Transverse colon (tissue), 4 donors: ENCODE measurements at regions of chr1 and their contacts with region 1.

Region 1: DNA sequence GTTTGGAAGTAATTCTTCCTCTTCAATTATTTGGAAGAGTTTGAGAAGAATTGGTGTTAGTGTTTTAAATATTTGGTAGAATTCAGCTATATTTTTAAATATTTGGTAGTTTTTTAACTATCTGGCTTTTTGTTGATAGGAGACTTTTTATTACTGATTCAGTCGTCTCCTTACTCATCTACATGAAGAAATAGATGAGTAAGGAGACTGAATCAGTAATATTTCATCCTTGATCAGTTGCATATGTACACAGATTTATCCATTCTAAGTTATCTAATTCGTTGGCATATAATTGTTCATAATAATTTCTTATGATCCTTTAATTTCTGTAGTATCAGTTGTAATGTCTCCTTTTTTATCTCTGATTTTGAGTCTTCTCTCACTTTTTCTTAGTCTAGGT is 224.1 kb downstream of the GPR52 start:
- DNase-seq: no peak
- H3K4me3 ChIP-seq: no peak overlapping the region
- H3K27ac ChIP-seq: no peak overlapping the region
- H3K4me1 ChIP-seq: no peaks in the 10 kb centered on the region
- H3K27me3 ChIP-seq: no peaks in the 10 kb centered on the region
- CTCF ChIP-seq: no peak
- EP300 ChIP-seq: no peak
- POLR2A ChIP-seq: no peak

Region 2: GRCh38 chr1:174652569-174653280 is 19.1 kb before region 1 on chr1:
- in situ Hi-C with region 1: no loop called
- intact Hi-C with region 1: loop called (anchors 1 kb)
- DNase-seq: no peak
- H3K4me3 ChIP-seq: no peak overlapping the region
- H3K27ac ChIP-seq: no peak overlapping the region
- H3K4me1 ChIP-seq: no peaks in the 10 kb centered on the region
- H3K27me3 ChIP-seq: no peaks in the 10 kb centered on the region
- CTCF ChIP-seq: no peak
- EP300 ChIP-seq: no peak
- POLR2A ChIP-seq: no peak